ENCODE measurements at regions of chr7 and their contacts with region 1.

Region 1: GRCh38 chr7:151206914-151207313 is 3.4 kb downstream of the H2BK1 start:
- DNase-seq: peak; percentile 52
- H3K4me3 Mint-ChIP-seq: no peak overlapping the region
- H3K27ac Mint-ChIP-seq: peak overlapping the region; percentile 74
- H3K4me1 Mint-ChIP-seq: peaks cover 27% of the 10 kb centered on the region
- H3K27me3 Mint-ChIP-seq: peaks cover 4% of the 10 kb centered on the region

Region 2: DNA sequence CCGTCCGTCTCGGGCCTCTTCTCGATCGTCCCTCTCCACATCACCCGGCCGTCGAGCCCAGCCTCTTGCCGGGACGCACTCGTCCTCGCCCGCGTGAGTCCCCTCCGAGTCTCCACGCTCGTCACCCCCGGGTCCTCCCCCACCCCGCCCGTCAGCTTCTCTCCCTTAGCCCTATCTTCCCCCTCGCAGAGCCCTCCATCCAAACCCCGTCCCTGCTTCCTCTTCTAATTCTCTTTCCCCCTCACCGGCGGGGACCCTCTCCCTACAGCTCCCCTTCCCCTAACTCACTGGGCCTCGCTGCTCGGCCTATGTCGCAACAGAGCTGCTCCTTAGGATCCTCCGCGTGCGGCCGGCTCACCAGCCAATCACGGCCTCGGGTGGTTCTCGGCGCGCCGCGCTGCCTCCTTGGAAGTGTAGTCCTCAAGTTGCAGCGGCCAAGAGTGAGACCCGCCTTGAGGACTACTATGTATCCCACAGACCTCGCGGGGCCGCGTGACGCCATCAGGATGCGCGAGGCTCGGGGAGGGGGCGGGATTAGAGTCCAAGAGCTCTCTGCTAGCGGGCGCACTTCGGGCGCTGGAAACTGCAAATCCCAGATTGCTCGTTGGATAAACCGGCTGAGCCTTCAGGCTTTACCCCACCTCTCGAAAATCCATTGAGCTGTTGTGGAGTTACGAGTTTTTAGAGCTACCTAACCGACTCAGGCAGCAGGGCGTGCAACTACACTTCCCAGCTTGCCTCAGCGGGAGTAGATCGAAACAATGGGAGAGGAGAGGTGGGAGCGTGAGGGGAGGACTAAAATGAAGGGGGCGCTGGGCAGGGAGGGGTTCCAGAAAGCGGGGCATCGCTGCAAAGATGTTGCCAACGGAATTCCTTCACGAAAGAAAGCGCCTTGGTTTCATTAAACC is 20.2 kb after region 1 on chr7 and contains the start of gene ABCF2:
- CTCF ChIA-PET with region 1: interaction called, 9 read pairs
- POLR2A ChIA-PET with region 1: interaction called, 30 read pairs
- DNase-seq: peak; percentile 99
- H3K4me3 Mint-ChIP-seq: peak within 1 kb of the TSS; percentile 98
- H3K27ac Mint-ChIP-seq: peak within 1 kb of the TSS; percentile 83
- H3K4me1 Mint-ChIP-seq: peaks cover 46% of the 10 kb centered on the region
- H3K27me3 Mint-ChIP-seq: no peaks in the 10 kb centered on the region
- total RNA-seq, gene ABCF2: 23.1 to 27.6 TPM

Region 3: GRCh38 chr7:151232091-151232916 is 25.4 kb after region 1 on chr7 and contains the start of gene CHPF2:
- CTCF ChIA-PET with region 1: interaction called, 9 read pairs
- POLR2A ChIA-PET with region 1: interaction called, 30 read pairs
- DNase-seq: peak; percentile 95
- H3K4me3 Mint-ChIP-seq: peak within 1 kb of the TSS; percentile 99
- H3K27ac Mint-ChIP-seq: peak within 1 kb of the TSS; percentile 99
- H3K4me1 Mint-ChIP-seq: peaks cover 47% of the 10 kb centered on the region
- H3K27me3 Mint-ChIP-seq: no peaks in the 10 kb centered on the region
- total RNA-seq, gene CHPF2: 56.0 to 56.4 TPM

Measured in activated CD4-positive, alpha-beta memory T cell treated with anti-CD3 and anti-CD28 coated beads, Interleukin-2, amount 10 ng/mL, durations not matched to agents 7 days and 5 days (primary cell).